Activated CD4-positive, alpha-beta T cell treated with anti-CD3 and anti-CD28 coated beads, Interleukin-2, amount 10 ng/mL, durations not matched to agents 24 days and 14 days (primary cell): ENCODE measurements at regions of chr14 and their contacts with region 1.

Region 1: DNA sequence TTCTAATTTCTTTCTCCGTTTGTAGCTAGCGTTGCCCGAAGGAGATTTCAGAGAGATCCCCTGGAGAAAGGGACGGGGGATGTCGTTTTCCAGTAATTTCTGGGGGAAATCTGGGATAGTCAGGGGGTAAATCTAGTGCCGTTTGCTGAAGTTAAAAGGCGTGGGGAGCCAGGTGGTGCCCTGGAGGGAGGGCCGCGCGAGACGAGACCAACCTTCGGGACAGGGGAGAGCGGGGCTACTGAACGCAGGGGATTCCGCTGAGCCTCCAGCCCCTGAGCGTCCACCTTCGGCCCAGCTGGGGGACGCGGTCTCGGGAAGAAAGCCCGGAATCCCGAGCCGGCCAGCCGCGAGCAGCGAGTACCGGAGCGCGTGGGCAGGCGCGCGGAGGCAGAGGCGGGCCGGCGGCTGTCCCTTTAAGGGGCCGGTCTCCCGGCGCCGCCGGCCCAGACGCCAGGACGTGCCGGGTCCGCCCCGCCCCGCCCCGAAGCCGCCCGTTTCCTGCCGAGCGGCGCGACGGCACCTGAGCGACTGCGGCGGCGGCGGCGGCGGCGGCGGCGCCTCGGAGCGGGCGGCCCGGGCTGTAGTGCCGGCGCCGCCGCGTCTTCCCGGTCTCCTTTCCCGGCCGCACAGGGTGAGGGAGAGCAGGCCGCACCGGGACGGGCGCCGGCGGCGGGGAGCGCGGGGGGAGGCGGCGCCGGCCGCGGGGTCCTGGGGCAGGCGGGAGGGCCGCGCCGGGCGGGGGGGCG is at the start of gene KTN1:
- DNase-seq: peak; percentile 96
- H3K4me3 Mint-ChIP-seq: peak within 1 kb of the TSS; percentile 95
- H3K27ac Mint-ChIP-seq: peak within 1 kb of the TSS; percentile 94
- H3K4me1 Mint-ChIP-seq: peaks cover 28% of the 10 kb centered on the region
- H3K27me3 Mint-ChIP-seq: no peaks in the 10 kb centered on the region
- total RNA-seq, gene KTN1: 130 and 135 TPM in 2 replicates

Region 2: DNA sequence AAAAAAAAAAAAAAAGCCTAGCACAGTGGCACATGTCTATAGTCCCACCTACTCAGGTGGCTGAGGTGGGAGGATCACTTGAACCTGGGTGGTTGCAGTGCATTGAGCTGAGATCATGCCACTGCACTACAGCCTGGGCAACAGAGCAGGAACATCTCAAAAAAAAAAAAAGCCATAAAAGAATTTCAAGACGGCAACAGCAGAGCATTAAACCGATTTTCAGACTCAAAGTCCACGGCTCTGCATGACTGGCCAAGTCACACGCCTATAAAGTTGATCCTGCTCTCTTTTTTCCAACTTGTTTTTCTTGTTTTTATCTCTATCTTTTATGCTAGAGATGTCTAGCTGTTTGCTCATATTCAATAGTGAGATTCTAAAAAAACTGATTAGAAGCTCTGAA is 263.3 kb before region 1 on chr14:
- intact Hi-C with region 1: no loop called
- DNase-seq: no peak
- H3K4me3 Mint-ChIP-seq: no peak overlapping the region
- H3K27ac Mint-ChIP-seq: no peak overlapping the region
- H3K4me1 Mint-ChIP-seq: peaks cover 12% of the 10 kb centered on the region
- H3K27me3 Mint-ChIP-seq: no peaks in the 10 kb centered on the region

Region 3: GRCh38 chr14:55339770-55340169 is 240.1 kb before region 1 on chr14:
- intact Hi-C with region 1: loop called (anchors 5 kb)
- DNase-seq: peak; percentile 71
- H3K4me3 Mint-ChIP-seq: peak overlapping the region; percentile 47
- H3K27ac Mint-ChIP-seq: peak overlapping the region; percentile 84
- H3K4me1 Mint-ChIP-seq: peaks cover 60% of the 10 kb centered on the region
- H3K27me3 Mint-ChIP-seq: no peaks in the 10 kb centered on the region

Region 4: GRCh38 chr14:55446218-55446654 is 133.7 kb before region 1 on chr14:
- intact Hi-C with region 1: loop called (anchors 10 kb)
- DNase-seq: peak; percentile 87
- H3K4me3 Mint-ChIP-seq: no peak overlapping the region
- H3K27ac Mint-ChIP-seq: no peak overlapping the region
- H3K4me1 Mint-ChIP-seq: peaks cover 16% of the 10 kb centered on the region
- H3K27me3 Mint-ChIP-seq: no peaks in the 10 kb centered on the region

Region 5: GRCh38 chr14:55665067-55665675 is 85.3 kb after region 1 on chr14:
- intact Hi-C with region 1: loop called (anchors 5 kb)
- DNase-seq: no peak
- H3K4me3 Mint-ChIP-seq: no peak overlapping the region
- H3K27ac Mint-ChIP-seq: peak overlapping the region; percentile 8
- H3K4me1 Mint-ChIP-seq: peaks cover 21% of the 10 kb centered on the region
- H3K27me3 Mint-ChIP-seq: no peaks in the 10 kb centered on the region

Region 6: DNA sequence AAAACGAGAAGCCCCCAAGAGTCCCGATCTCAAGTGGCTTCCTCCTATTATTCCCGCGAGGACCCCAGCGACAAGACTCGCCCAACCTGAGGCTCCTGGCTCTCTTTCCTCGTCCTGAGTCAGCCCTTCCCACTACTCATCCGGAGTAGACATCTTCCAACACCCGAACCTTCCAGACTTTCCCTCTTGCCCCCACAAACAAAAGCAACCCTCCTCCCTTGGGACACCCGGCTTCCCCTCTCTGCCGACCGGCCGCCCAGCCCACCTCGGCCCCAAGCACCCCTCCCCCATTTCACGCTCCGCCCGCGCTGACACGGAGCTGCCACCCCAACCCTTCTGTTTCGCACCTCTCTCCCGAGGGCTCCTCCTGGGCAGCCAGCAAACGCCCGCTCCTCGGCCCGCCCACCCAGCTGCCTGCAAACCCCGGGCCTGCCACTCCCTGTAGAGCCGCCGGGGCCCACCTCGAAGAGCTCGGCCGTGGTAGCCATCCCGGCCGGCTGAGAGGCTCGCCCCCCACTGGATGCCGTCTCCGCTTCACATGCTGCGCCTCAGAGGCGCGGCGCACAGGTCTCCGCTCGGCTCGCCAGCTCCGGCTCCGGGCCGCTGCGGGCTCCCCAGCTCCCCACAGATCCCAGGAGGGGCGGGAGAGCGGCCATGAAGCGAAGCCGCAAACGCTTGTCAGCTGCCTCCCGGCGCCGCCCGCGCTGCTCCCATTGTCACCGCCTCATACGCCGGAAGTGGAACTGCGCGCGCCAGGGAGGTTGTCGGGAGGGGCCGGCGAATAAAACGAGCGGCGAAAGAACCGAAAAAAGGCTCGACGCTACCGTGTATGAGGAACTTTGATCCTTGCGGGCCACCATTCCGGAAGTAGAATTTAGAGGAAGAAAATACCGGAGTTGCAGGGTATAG is 1688.5 kb after region 1 on chr14 and contains the starts of genes AP5M1 and EXOC5:
- intact Hi-C with region 1: loop called (anchors 2 kb)
- DNase-seq: peak; percentile 98
- H3K4me3 Mint-ChIP-seq: peak within 1 kb of the TSS; percentile 96
- H3K27ac Mint-ChIP-seq: peak within 1 kb of the TSS; percentile 100
- H3K4me1 Mint-ChIP-seq: peaks cover 46% of the 10 kb centered on the region
- H3K27me3 Mint-ChIP-seq: no peaks in the 10 kb centered on the region
- total RNA-seq, gene AP5M1: 41.6 and 47.5 TPM in 2 replicates
- total RNA-seq, gene EXOC5: 76.8 and 80.5 TPM in 2 replicates